GM10248 (cell line): ENCODE measurements at regions of chr2 and their contacts with region 1.

Region 1: DNA sequence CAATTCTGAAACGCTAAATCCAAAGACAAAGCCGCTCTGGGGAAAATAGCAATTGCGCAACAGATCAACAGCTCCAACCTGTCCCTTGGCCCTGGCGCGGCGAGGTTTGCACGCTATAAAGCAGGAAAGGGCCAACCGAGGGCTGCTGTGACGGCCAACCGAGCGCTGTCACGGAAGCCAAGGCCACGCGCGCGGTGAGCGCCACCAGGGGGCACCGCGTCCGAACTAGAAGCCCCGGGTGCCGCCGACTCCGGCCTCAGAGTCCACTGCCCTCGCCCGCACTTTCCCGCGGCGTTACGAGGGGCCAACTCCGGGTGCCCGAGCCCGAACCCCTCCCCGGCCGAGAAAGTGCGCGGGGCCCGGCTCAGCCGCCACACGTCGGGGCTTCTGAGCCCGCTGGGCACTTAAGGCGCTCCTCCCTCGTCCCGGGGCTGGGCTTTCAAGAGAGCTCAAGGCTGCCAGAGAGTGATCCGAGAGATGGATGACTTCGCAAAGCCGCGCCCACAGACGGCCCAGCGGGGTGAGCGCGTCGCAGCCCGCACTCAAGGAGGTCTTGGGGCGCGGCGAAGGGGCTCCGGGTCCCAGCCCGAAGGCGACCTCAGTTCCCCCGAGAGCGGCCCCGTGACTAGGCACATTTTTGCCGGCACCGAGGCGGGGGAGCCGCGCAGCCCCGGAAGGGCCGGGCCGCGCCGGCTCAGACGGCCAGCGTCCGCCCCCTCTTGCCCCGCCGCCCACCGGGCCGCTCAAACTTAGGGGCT is 897 bp downstream of the NFE2L2 start:
- DNase-seq: peak; percentile 83
- CTCF ChIP-seq: peak; percentile 94

Region 2: DNA sequence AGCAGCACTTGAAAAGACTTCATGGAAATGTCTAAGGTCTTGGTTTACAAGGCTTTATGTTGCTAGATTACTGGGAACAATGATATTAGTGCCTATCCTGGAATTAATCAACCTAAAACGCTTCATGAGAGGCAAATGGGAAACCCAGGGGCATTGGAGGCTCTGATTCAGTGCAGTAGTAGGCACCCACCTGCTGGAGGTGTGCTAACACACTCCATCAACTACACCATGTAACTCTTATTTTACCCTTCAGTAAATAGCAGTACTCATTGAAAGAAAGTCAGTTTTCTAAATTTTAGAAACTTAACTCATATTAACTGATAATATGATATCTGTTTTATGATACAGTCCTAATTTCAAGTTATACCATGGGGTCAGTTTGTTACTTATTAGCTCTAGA is 68.4 kb before region 1 on chr2:
- CTCF ChIA-PET with region 1: interaction called, 16 read pairs
- POLR2A ChIA-PET with region 1: interaction called, 3 read pairs
- DNase-seq: no peak
- CTCF ChIP-seq: peak; percentile 11

Region 3: GRCh38 chr2:177239932-177240630 is 23.5 kb before region 1 on chr2:
- CTCF ChIA-PET with region 1: interaction called, 22 read pairs
- POLR2A ChIA-PET with region 1: interaction called, 5 read pairs
- DNase-seq: no peak
- CTCF ChIP-seq: no peak

Region 4: DNA sequence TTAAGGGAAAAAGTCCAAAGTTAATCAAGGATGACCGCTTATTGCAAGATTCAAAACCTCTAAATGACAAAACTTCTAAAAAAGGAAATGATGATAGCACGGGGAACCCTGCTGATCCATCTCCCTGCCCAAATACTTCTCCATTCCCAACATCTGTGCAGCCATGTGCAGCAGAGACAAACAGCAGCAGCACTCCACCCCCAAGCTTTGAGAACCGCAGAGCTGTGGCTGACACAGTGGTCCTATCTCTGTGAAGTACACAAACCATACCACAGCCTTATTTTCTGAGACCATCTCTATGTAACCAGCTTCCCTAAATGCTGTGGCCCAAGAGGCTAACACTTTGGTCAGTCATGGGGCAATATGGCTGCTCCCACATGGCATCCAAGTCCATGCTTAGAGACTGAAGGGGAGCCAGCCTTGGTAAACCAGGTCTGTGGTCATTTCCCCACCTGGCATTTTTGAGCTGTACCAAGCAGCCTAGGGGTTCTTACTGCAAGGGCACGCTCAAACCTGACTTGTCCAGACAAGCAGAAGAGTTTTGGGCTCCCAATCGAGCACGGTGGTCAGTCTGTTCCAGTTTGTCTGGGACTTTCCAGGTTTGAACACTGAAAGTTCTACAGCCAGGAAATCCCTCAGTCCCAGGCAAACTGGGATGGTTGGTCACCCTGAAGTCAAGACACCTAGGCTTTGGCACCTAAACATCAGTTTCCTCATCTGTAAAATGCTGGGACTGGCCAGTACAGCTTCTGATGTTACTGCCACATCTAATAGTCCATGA is 18.0 kb after region 1 on chr2:
- CTCF ChIA-PET with region 1: interaction called, 33 read pairs
- POLR2A ChIA-PET with region 1: interaction called, 4 read pairs
- DNase-seq: peak; percentile 21
- CTCF ChIP-seq: no peak

Region 5: GRCh38 chr2:177296040-177296439 is 32.4 kb after region 1 on chr2:
- CTCF ChIA-PET with region 1: interaction called, 37 read pairs
- POLR2A ChIA-PET with region 1: interaction called, 3 read pairs
- DNase-seq: peak; percentile 54
- CTCF ChIP-seq: no peak

Region 6: GRCh38 chr2:177363332-177363731 is 99.7 kb after region 1 on chr2:
- CTCF ChIA-PET with region 1: no interaction called
- POLR2A ChIA-PET with region 1: no interaction called
- DNase-seq: no peak
- CTCF ChIP-seq: no peak

Region 7: DNA sequence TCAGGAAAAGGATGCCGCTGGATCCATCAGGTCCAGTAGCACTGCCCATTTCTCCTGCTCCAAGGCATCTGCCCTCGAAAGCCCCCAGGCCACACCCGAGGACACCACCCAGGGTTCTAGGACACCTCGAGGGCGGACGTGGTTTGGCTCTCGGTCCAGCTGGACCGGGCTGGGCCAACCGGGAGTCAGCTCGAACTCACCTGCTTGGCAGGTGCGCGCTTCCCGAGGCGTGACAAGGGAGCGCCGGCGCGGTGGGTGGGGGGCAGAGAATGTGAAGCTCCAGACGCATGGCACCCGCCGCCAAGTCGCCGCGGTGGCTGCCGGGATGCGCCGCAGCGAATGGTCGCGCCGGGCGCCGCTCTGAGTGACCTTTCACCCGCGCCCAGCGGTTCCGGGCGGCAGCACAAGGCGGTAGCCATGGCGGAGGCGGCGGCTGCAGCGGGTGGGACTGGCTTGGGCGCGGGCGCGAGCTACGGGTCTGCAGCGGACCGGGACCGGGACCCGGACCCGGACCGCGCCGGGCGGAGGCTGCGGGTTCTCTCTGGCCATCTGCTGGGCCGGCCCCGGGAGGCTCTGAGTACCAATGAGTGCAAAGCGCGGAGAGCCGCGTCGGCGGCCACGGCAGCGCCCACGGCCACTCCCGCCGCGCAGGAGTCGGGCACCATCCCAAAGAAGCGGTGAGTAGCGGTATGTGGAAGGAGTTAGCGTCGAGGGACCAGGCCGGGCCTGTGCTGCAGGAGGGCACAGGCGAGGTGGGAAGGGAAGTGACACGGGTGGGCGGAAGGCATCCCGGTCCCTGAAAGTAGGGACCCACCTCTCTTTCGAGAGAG is 129.0 kb after region 1 on chr2 and contains the start of gene AGPS:
- CTCF ChIA-PET with region 1: interaction called, 10 read pairs
- POLR2A ChIA-PET with region 1: no interaction called
- DNase-seq: peak; percentile 89
- CTCF ChIP-seq: no peak